ENCODE measurements at regions of chr3 and their contacts with region 1.

Region 1: GRCh38 chr3:175620532-175620931 is 761.4 kb downstream of the NAALADL2 start:
- DNase-seq: peak in 1 of 5 donors; percentile 37
- ATAC-seq: no peak
- H3K4me3 ChIP-seq: no peak overlapping the region
- H3K27ac ChIP-seq: no peak overlapping the region
- H3K4me1 ChIP-seq: no peaks in the 10 kb centered on the region
- H3K27me3 ChIP-seq: no peaks in the 10 kb centered on the region
- CTCF ChIP-seq: no peak
- POLR2A ChIP-seq: no peak

Region 2: GRCh38 chr3:175564363-175564762 is 56.2 kb before region 1 on chr3:
- intact Hi-C with region 1: loop called in 1 of 10 experiments (anchors 10 kb)
- DNase-seq: no peak
- ATAC-seq: no peak
- H3K4me3 ChIP-seq: no peak overlapping the region
- H3K27ac ChIP-seq: no peak overlapping the region
- H3K4me1 ChIP-seq: no peaks in the 10 kb centered on the region
- H3K27me3 ChIP-seq: no peaks in the 10 kb centered on the region
- CTCF ChIP-seq: no peak
- POLR2A ChIP-seq: no peak

Region 3: GRCh38 chr3:175805825-175806224 is 185.3 kb after region 1 on chr3:
- intact Hi-C with region 1: no loop called
- DNase-seq: no peak
- ATAC-seq: no peak
- H3K4me3 ChIP-seq: no peak overlapping the region
- H3K27ac ChIP-seq: no peak overlapping the region
- H3K4me1 ChIP-seq: no peaks in the 10 kb centered on the region
- H3K27me3 ChIP-seq: no peaks in the 10 kb centered on the region
- CTCF ChIP-seq: no peak
- POLR2A ChIP-seq: no peak

Measured in heart left ventricle (tissue), 16 donors.